ENCODE measurements at regions of chr17 and their contacts with region 1.

Region 1: GRCh38 chr17:39401412-39402243 is at the start of gene FBXL20:
- DNase-seq: peak; percentile 85
- ATAC-seq: peak; percentile 76
- H3K4me3 Mint-ChIP-seq: peak within 1 kb of the TSS; percentile 98
- H3K27ac Mint-ChIP-seq: peak within 1 kb of the TSS; percentile 96
- H3K4me1 Mint-ChIP-seq: peaks cover 20% of the 10 kb centered on the region
- H3K27me3 Mint-ChIP-seq: no peaks in the 10 kb centered on the region
- CTCF ChIP-seq: no peak
- total RNA-seq, gene FBXL20: 14.1 and 14.4 TPM in 2 replicates

Region 2: DNA sequence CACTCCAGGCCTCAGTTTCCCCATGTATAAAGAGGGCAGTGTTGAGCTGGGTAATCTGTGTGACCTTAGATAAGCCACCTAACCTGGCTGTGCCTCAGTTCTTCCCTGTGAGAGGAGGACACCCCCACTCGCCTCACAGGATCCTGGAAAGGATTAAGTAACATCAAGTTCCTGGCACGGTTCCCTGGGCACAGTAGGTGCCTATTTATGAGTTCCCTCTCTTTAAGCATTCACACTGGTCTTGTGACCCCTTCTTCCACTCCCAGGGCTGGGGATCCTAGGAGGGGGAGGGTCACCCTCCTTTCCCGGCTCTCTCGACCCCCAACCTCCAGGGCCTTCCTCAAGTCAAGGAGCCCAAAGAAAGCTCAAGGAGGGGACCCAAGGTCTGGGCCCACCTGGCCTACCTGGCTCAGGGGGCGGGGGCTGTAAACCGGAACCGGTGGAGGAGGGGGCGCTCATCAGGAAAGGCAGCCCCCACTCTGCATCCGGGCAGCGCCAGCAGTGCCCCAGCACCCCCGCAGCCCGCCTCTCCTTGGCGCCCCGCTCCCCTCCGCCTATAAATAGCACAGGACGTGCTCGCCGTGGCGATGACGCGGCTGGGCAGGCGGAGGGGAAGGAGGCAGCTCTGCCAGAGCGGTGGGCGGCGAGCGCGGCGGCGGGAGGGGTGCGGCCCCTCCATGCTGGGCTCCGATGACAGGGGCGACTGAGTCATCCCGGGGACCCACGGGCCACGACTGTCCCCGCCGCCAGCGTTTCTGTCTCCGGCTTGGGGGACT is 192.1 kb before region 1 on chr17:
- CTCF ChIA-PET with region 1: no interaction called
- POLR2A ChIA-PET with region 1: interaction called, 11 read pairs
- intact Hi-C with region 1: no loop called
- DNase-seq: peak; percentile 45
- ATAC-seq: peak; percentile 37
- H3K4me3 Mint-ChIP-seq: peak overlapping the region; percentile 61
- H3K27ac Mint-ChIP-seq: no peak overlapping the region
- H3K4me1 Mint-ChIP-seq: peaks cover 36% of the 10 kb centered on the region
- H3K27me3 Mint-ChIP-seq: peaks cover 13% of the 10 kb centered on the region
- CTCF ChIP-seq: no peak

Region 3: DNA sequence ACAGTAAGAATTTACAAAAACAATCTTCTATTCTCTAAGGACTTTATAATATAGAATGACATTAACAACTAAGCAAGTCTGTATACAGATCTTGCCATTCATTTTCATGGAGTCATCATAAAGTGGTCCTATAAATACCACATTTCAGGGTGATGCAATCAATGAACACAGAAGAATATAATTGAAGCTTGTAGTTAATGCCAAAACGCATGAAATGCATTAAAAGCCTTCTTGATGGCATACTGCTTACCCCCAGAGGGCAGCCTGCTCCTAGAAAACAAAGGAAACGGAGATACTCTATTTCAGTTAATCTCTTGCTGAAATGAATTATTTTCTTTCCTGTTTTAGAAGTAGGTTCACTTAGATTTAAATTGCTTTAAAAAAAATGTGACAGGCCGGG is 130.7 kb before region 1 on chr17:
- CTCF ChIA-PET with region 1: no interaction called
- POLR2A ChIA-PET with region 1: interaction called, 4 read pairs
- intact Hi-C with region 1: loop called (anchors 5 kb)
- DNase-seq: no peak
- ATAC-seq: no peak
- H3K4me3 Mint-ChIP-seq: no peak overlapping the region
- H3K27ac Mint-ChIP-seq: no peak overlapping the region
- H3K4me1 Mint-ChIP-seq: peaks cover under 1% of the 10 kb centered on the region
- H3K27me3 Mint-ChIP-seq: no peaks in the 10 kb centered on the region
- CTCF ChIP-seq: no peak

Region 4: GRCh38 chr17:39281806-39282205 is 119.8 kb before region 1 on chr17:
- CTCF ChIA-PET with region 1: no interaction called
- POLR2A ChIA-PET with region 1: no interaction called
- intact Hi-C with region 1: no loop called
- DNase-seq: no peak
- ATAC-seq: no peak
- H3K4me3 Mint-ChIP-seq: no peak overlapping the region
- H3K27ac Mint-ChIP-seq: no peak overlapping the region
- H3K4me1 Mint-ChIP-seq: peaks cover 10% of the 10 kb centered on the region
- H3K27me3 Mint-ChIP-seq: no peaks in the 10 kb centered on the region
- CTCF ChIP-seq: no peak

Region 5: DNA sequence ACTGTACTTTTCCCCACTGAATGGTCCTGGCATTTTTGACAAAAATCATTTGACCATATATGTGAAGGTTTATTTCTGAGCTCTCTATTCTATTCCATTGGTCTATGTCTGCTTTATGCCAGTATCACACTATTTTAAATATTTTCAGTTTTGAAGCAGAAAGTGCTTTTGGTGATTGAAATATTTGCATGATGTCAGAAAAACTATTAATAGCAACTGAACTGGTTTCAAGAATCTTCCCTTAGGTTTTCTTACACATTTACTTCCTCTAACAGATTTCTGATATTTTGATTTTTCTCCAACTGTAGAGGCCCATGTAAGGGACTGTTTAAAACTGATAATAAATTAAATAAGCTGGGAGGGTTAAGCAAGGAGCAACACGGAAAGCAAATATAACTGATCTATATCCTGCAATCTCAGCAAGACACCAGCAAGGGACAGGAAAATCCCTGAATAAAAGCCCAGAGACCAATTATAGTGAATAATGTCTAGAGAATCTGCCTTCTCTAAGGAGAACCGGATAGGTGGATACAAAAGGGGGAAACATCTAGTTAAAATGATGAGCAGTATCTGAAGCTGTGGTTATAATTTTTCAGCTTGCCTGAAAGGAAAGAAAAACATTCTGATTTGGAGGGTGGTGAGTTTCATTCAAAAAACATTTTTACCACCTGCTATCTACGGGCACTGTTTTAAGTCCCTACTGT is 95.0 kb before region 1 on chr17:
- CTCF ChIA-PET with region 1: no interaction called
- POLR2A ChIA-PET with region 1: interaction called, 9 read pairs
- intact Hi-C with region 1: loop called (anchors 5 kb)
- DNase-seq: no peak
- ATAC-seq: peak; percentile 60
- H3K4me3 Mint-ChIP-seq: peak overlapping the region; percentile 75
- H3K27ac Mint-ChIP-seq: peak overlapping the region; percentile 75
- H3K4me1 Mint-ChIP-seq: peaks cover 23% of the 10 kb centered on the region
- H3K27me3 Mint-ChIP-seq: no peaks in the 10 kb centered on the region
- CTCF ChIP-seq: no peak

Region 6: GRCh38 chr17:39380144-39380543 is 21.5 kb before region 1 on chr17:
- CTCF ChIA-PET with region 1: no interaction called
- POLR2A ChIA-PET with region 1: interaction called, 10 read pairs
- intact Hi-C with region 1: no loop called
- DNase-seq: no peak
- ATAC-seq: no peak
- H3K4me3 Mint-ChIP-seq: no peak overlapping the region
- H3K27ac Mint-ChIP-seq: no peak overlapping the region
- H3K4me1 Mint-ChIP-seq: peaks cover 25% of the 10 kb centered on the region
- H3K27me3 Mint-ChIP-seq: no peaks in the 10 kb centered on the region
- CTCF ChIP-seq: no peak

Region 7: DNA sequence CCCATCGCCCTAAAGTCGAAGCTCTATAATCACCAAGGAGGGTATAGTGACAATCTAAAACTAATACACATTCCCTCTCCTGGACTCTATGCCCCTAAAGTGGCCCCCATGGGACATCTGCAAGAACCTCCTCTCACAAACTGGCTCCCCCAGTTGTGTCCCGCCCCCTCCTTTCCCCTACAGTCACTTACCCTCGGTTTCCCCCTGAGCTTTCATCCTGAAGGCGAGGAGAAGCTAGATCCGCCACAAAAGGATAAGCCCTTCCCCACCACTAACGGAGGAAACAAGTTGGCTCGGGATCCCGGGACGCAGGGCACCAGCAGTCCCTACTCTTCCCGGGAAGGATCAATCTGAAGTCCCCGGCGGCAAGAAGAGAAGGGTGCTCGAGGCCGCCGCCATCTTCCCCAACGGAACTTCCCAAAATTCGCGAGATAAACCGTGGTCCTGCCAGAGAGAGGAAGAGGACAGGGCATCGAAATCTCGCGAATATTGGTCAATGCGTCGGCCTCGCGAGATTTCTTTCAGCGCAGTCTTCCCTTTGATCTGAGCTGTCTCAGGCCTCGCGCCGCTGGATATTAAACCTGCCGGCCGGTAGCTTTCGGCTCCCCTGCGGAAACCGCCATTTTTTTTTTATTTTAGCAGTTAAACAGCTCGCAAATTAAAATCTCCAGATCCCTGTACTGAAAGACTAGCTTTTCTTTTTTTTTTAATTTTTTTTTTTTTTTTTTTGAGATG is 49.4 kb after region 1 on chr17 and contains the start of gene MED1:
- CTCF ChIA-PET with region 1: no interaction called
- POLR2A ChIA-PET with region 1: interaction called, 11 read pairs
- intact Hi-C with region 1: loop called (anchors 2 kb)
- DNase-seq: peak; percentile 76
- ATAC-seq: peak; percentile 97
- H3K4me3 Mint-ChIP-seq: peak within 1 kb of the TSS; percentile 98
- H3K27ac Mint-ChIP-seq: peak within 1 kb of the TSS; percentile 96
- H3K4me1 Mint-ChIP-seq: peaks cover 28% of the 10 kb centered on the region
- H3K27me3 Mint-ChIP-seq: no peaks in the 10 kb centered on the region
- CTCF ChIP-seq: no peak
- total RNA-seq, gene MED1: 59.2 and 64.3 TPM in 2 replicates

Region 8: DNA sequence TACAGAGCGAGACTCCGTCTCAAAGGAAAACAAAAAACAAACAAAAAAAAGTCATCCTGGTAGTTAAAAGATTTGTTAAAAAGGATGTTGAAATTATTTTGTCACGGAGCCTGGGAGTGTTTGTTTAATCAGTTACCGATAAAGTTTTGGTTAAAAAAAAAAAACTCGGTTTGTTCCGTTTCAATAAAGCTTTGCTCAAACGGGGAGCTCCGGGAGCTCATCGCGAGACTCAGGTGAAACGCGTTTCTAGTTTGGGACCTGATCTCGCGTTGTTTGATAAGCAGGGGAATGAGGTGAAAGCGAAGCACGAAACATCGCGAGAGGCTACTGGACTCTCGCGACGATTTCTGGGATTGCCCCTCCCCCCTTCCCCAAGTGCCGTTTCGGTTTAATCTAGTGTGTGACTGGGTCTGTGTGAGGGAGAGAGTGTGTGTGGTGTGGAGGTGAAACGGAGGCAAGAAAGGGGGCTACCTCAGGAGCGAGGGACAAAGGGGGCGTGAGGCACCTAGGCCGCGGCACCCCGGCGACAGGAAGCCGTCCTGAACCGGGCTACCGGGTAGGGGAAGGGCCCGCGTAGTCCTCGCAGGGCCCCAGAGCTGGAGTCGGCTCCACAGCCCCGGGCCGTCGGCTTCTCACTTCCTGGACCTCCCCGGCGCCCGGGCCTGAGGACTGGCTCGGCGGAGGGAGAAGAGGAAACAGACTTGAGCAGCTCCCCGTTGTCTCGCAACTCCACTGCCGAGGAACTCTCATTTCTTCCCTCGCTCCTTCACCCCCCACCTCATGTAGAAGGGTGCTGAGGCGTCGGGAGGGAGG is 59.7 kb after region 1 on chr17 and contains the start of gene CDK12:
- CTCF ChIA-PET with region 1: no interaction called
- POLR2A ChIA-PET with region 1: interaction called, 21 read pairs
- intact Hi-C with region 1: loop called (anchors 1 kb)
- DNase-seq: peak; percentile 87
- ATAC-seq: peak; percentile 87
- H3K4me3 Mint-ChIP-seq: peak within 1 kb of the TSS; percentile 97
- H3K27ac Mint-ChIP-seq: peak within 1 kb of the TSS; percentile 98
- H3K4me1 Mint-ChIP-seq: peaks cover 50% of the 10 kb centered on the region
- H3K27me3 Mint-ChIP-seq: no peaks in the 10 kb centered on the region
- CTCF ChIP-seq: no peak
- total RNA-seq, gene CDK12: 100 and 118 TPM in 2 replicates

Measured in activated B cell treated with CpG ODN at 0.5 μM for 24 hours (primary cell).